ENCODE measurements at regions of chr4 and their contacts with region 1.

Region 1: DNA sequence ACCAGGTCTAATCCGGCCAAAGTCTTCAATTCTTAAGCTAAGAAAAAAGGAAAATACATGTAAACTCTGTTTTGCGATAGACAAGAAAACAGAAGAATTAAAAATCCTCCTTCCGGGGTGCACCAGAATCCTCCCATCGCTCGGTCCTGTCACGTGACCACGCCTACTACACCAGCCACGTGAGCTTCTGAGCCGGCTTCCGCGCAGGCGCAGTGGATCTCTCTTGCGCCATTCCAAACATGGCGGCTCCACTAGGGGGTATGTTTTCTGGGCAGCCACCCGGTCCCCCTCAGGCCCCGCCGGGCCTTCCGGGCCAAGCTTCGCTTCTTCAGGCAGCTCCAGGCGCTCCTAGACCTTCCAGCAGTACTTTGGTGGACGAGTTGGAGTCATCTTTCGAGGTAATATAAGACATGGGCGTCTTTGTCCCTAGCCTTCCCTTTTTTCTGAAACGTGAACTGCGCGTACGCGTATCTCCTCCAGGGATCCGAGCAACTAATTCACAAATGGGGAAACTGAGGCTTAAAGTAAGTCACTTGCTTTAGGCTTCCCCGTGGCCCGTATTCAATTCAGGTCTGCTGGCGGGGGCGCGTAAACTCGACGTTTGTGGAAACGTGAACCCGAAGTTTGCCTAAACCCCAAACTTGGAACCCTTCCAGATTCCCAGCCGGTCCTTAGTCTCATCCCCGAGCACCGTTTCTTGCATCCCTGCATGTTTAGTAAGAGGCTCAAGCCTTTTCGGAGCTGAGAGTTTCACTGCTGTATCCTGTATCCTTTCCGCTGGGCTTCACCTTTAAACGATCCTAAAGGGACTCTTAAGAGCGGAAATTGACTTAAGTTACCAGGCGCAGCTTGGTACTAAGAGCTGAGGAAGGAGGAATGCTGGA is at the start of gene MED28:
- DNase-seq: peak; percentile 84 to 98 (median 95)
- ATAC-seq: peak; percentile 89
- H3K4me3 ChIP-seq: peak within 1 kb of the TSS; percentile 95 to 99
- H3K4me3 Mint-ChIP-seq: peak within 1 kb of the TSS; percentile 99
- H3K27ac ChIP-seq: peak within 1 kb of the TSS; percentile 87 to 92
- H3K27ac Mint-ChIP-seq: peak within 1 kb of the TSS; percentile 97
- H3K4me1 ChIP-seq: peaks cover 41% of the 10 kb centered on the region
- H3K4me1 Mint-ChIP-seq: peaks cover 41% of the 10 kb centered on the region
- H3K27me3 ChIP-seq: no peaks in the 10 kb centered on the region
- H3K27me3 Mint-ChIP-seq: no peaks in the 10 kb centered on the region
- CTCF ChIP-seq: no peak
- total RNA-seq, gene MED28: 60.0 to 64.8 TPM

Region 2: GRCh38 chr4:15655229-15656037 is 1959.2 kb before region 1 on chr4 and contains the start of gene FBXL5:
- CTCF ChIA-PET with region 1: no interaction called
- POLR2A ChIA-PET with region 1: no interaction called
- intact Hi-C with region 1: loop called in 1 of 2 experiments (anchors 10 kb)
- DNase-seq: peak; percentile 66 to 95 (median 80)
- ATAC-seq: peak; percentile 79
- H3K4me3 ChIP-seq: peak within 1 kb of the TSS; percentile 67 to 85
- H3K4me3 Mint-ChIP-seq: peak within 1 kb of the TSS; percentile 98
- H3K27ac ChIP-seq: peak within 1 kb of the TSS; percentile 88 to 92
- H3K27ac Mint-ChIP-seq: peak within 1 kb of the TSS; percentile 97
- H3K4me1 ChIP-seq: peaks cover 51% of the 10 kb centered on the region
- H3K4me1 Mint-ChIP-seq: peaks cover 46% of the 10 kb centered on the region
- H3K27me3 ChIP-seq: no peaks in the 10 kb centered on the region
- H3K27me3 Mint-ChIP-seq: no peaks in the 10 kb centered on the region
- CTCF ChIP-seq: no peak
- total RNA-seq, gene FBXL5: 60.4 to 61.7 TPM

Region 3: DNA sequence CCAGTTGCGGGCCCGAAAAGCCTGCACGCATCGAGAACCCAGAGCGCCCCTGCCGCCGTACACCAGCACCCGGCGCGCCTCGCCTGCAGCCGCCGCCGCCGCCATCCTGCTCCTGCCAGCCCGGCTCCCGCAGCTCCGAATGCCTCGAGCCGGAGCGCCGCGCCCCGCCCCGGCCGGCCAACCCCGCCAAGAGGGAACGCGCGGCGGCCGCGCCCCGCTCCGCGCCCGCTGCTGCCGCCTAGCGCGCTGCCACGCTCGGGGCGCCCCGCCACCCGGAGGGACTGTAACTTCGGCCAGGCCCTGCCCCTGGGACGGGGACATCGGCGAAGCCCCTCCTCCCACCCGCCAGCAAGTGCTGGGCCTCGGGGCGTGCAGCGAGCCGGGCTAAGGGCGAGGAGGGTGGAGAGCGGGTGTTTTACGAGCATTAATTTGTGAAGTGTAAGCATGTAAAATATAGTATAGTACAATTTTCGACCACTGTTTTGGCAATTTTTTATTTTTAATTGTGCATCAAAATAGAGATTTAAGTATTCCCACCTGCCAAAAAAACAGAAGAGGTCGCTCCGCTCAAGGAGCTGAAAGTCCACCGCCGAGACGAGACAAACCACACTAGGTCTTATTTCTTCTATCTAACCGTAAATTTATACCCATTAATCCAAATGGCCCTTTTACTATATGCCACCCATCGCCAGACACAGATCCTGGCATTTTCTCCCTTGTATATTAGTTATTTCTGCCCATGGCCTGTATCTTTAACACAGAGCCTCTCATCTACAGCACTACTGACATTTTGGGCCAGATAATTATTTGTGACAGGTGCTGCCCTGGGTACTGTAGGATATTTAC is 102.5 kb before region 1 on chr4 and contains the start of gene QDPR:
- CTCF ChIA-PET with region 1: no interaction called
- POLR2A ChIA-PET with region 1: interaction called, 5 read pairs
- intact Hi-C with region 1: loop called in 1 of 2 experiments (anchors 1 kb)
- DNase-seq: peak; percentile 38 to 86 (median 70)
- ATAC-seq: peak; percentile 91
- H3K4me3 ChIP-seq: peak within 1 kb of the TSS; percentile 63 to 80
- H3K4me3 Mint-ChIP-seq: peak within 1 kb of the TSS; percentile 99
- H3K27ac ChIP-seq: peak within 1 kb of the TSS; percentile 49 to 57
- H3K27ac Mint-ChIP-seq: peak within 1 kb of the TSS; percentile 93
- H3K4me1 ChIP-seq: peaks cover 18% of the 10 kb centered on the region
- H3K4me1 Mint-ChIP-seq: peaks cover 33% of the 10 kb centered on the region
- H3K27me3 ChIP-seq: no peaks in the 10 kb centered on the region
- H3K27me3 Mint-ChIP-seq: peaks cover 6% of the 10 kb centered on the region
- CTCF ChIP-seq: peak; percentile 30
- total RNA-seq, gene QDPR: 10.9 to 11.6 TPM

Region 4: GRCh38 chr4:17544205-17544604 is 70.5 kb before region 1 on chr4:
- CTCF ChIA-PET with region 1: interaction called, 10 read pairs
- POLR2A ChIA-PET with region 1: interaction called, 3 read pairs
- intact Hi-C with region 1: no loop called
- DNase-seq: no peak
- ATAC-seq: no peak
- H3K4me3 ChIP-seq: no peak overlapping the region
- H3K4me3 Mint-ChIP-seq: no peak overlapping the region
- H3K27ac ChIP-seq: no peak overlapping the region
- H3K27ac Mint-ChIP-seq: no peak overlapping the region
- H3K4me1 ChIP-seq: no peaks in the 10 kb centered on the region
- H3K4me1 Mint-ChIP-seq: peaks cover 3% of the 10 kb centered on the region
- H3K27me3 ChIP-seq: no peaks in the 10 kb centered on the region
- H3K27me3 Mint-ChIP-seq: peaks cover 9% of the 10 kb centered on the region
- CTCF ChIP-seq: no peak

Region 5: DNA sequence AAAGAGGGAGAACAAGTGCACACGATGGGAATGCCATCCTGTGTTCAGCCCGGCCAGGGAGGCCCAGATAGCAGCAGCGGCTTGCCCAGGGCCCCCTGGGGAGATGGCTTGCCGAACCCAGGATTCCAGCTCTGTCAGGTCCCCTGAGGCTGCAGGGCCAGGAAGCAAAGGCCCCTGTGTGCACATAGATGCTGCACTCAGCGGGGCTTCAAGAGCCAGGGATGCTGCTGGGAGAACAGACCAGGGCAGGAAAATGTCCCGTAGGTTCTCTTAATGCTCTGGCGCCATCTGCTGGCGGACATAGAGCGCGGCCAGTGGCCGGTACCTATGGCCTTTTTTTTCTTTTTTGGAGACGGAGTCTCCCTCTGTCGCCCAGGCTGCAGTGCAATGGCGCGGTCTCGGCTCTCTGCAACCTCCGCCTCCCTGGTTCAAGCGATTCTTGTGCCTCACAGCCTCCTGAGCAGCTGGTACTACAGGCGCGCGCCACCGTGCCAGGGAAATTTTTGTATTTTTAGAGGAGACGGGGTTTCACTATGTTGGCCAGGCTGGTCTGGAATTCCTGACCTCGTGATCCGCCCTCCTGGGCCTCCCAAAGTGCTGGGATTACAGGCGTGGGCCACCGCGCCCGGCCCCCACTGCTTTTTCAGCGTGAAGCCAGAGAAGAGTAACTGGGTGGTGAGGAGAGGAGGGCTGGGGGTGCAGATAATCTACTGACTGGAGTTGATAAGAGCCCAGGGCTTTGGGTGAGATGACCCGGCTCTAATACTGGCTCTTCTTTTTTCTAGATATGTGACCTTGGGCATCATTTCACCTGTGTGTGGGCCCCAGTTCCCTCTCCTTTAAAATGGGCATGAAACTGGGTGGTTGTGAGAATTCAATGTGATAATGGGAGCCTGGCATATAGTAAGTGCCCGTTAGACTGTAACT is 22.3 kb after region 1 on chr4:
- CTCF ChIA-PET with region 1: interaction called, 4 read pairs
- POLR2A ChIA-PET with region 1: no interaction called
- intact Hi-C with region 1: loop called (anchors 2 kb)
- DNase-seq: peak; percentile 46 to 80 (median 72)
- ATAC-seq: peak; percentile 87
- H3K4me3 ChIP-seq: no peak overlapping the region
- H3K4me3 Mint-ChIP-seq: no peak overlapping the region
- H3K27ac ChIP-seq: no peak overlapping the region
- H3K27ac Mint-ChIP-seq: no peak overlapping the region
- H3K4me1 ChIP-seq: no peaks in the 10 kb centered on the region
- H3K4me1 Mint-ChIP-seq: peaks cover 2% of the 10 kb centered on the region
- H3K27me3 ChIP-seq: no peaks in the 10 kb centered on the region
- H3K27me3 Mint-ChIP-seq: no peaks in the 10 kb centered on the region
- CTCF ChIP-seq: peak; percentile 81

Region 6: GRCh38 chr4:18021722-18022571 is 407.3 kb after region 1 on chr4 and contains the start of gene LCORL:
- CTCF ChIA-PET with region 1: no interaction called
- POLR2A ChIA-PET with region 1: no interaction called
- intact Hi-C with region 1: loop called (anchors 1 to 2 kb)
- DNase-seq: peak; percentile 75 to 95 (median 86)
- ATAC-seq: peak; percentile 83
- H3K4me3 ChIP-seq: peak within 1 kb of the TSS; percentile 63 to 98
- H3K4me3 Mint-ChIP-seq: peak within 1 kb of the TSS; percentile 95
- H3K27ac ChIP-seq: peak within 1 kb of the TSS; percentile 63 to 80
- H3K27ac Mint-ChIP-seq: peak within 1 kb of the TSS; percentile 89
- H3K4me1 ChIP-seq: peaks cover 18% of the 10 kb centered on the region
- H3K4me1 Mint-ChIP-seq: peaks cover 27% of the 10 kb centered on the region
- H3K27me3 ChIP-seq: no peaks in the 10 kb centered on the region
- H3K27me3 Mint-ChIP-seq: peaks cover 2% of the 10 kb centered on the region
- CTCF ChIP-seq: no peak
- total RNA-seq, gene LCORL: 5.3 to 7.5 TPM

Measured in CD8-positive, alpha-beta T cell (primary cell).